ENCODE measurements at regions of chr2 and their contacts with region 1.

Region 1: GRCh38 chr2:28621172-28622100 is 125.6 kb downstream of the PLB1 start:
- DNase-seq: peak; percentile 74
- H3K4me3 Mint-ChIP-seq: peak overlapping the region; percentile 52
- H3K27ac Mint-ChIP-seq: peak overlapping the region; percentile 96
- H3K4me1 Mint-ChIP-seq: peaks cover 89% of the 10 kb centered on the region
- H3K27me3 Mint-ChIP-seq: no peaks in the 10 kb centered on the region

Region 2: GRCh38 chr2:28566521-28567041 is 54.9 kb before region 1 on chr2:
- intact Hi-C with region 1: loop called (anchors 2 kb)
- DNase-seq: peak; percentile 85
- H3K4me3 Mint-ChIP-seq: peak overlapping the region; percentile 87
- H3K27ac Mint-ChIP-seq: peak overlapping the region; percentile 82
- H3K4me1 Mint-ChIP-seq: peaks cover 19% of the 10 kb centered on the region
- H3K27me3 Mint-ChIP-seq: peaks cover 1% of the 10 kb centered on the region

Region 3: GRCh38 chr2:28594289-28595108 is 26.9 kb before region 1 on chr2:
- intact Hi-C with region 1: loop called (anchors 2 kb)
- DNase-seq: peak; percentile 73
- H3K4me3 Mint-ChIP-seq: peak overlapping the region; percentile 11
- H3K27ac Mint-ChIP-seq: peak overlapping the region; percentile 79
- H3K4me1 Mint-ChIP-seq: peaks cover 18% of the 10 kb centered on the region
- H3K27me3 Mint-ChIP-seq: no peaks in the 10 kb centered on the region

Region 4: GRCh38 chr2:28649481-28650214 is 28.2 kb after region 1 on chr2:
- intact Hi-C with region 1: no loop called
- DNase-seq: no peak
- H3K4me3 Mint-ChIP-seq: no peak overlapping the region
- H3K27ac Mint-ChIP-seq: peak overlapping the region; percentile 70
- H3K4me1 Mint-ChIP-seq: peaks cover 37% of the 10 kb centered on the region
- H3K27me3 Mint-ChIP-seq: no peaks in the 10 kb centered on the region

Region 5: GRCh38 chr2:28681158-28681571 is 59.7 kb after region 1 on chr2:
- intact Hi-C with region 1: loop called (anchors 1 kb)
- DNase-seq: peak; percentile 45
- H3K4me3 Mint-ChIP-seq: peak overlapping the region; percentile 39
- H3K27ac Mint-ChIP-seq: peak overlapping the region; percentile 95
- H3K4me1 Mint-ChIP-seq: peaks cover 61% of the 10 kb centered on the region
- H3K27me3 Mint-ChIP-seq: no peaks in the 10 kb centered on the region